Right ventricle myocardium superior (tissue), 1 donor: ENCODE measurements at regions of chr14 and their contacts with region 1.

Region 1: DNA sequence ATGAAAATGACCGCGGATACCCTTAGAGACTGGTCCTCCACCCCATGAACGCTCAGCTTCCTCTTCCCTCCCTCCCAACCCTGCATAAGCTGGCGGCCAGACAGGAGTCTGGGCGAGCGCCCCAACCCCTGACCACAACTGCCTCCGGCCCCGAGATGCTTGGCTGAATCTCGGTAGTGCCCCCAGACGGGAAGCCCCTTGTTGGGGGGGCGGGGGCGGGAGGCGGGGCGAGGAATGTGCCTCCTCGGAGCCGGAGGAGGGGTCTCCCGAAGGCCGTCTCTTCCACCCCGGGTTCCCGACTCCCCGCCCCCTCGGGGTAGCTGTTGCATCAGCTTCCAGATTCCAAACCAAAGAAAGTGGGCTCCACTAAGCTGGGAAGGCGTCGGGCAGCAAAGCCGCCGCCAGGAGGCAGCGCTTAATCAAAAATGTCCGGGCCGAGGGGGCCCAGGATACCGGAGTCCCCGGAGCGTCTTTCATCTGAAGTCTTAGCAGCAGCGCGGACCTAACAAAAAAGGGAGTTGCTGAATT is 7.1 kb upstream of the MRPL52 start:
- DNase-seq: peak; percentile 86
- ATAC-seq: peak; percentile 89

Region 2: DNA sequence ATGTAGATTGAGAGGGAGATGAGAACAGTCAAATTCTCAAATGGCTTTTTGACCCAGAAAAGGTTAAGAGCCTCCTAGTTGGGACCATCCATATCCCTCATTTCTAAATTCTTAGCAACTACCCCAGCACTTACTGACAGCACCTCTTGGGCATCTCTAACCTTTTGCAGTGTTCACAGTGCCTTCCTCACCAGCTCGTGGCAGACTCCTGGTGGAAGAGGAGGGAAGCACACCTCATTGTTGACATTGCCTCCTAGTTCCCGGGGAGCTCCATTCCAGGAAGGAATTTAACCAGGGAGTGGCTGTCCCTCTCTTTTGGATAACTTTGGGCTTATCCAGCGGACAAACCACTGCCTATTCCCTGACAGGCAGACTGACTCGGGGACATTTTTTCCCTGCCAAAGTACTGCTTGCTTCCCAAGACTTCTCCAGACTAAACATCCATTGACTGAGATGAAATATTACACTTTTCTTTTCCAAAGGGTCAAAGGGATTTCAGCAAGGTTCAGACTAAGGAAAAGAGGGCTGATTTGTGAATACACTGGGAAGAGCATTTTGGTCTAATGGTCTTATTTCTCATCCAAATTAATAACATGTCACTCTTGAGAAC is 169.5 kb before region 1 on chr14:
- intact Hi-C with region 1: loop called (anchors 10 kb)
- DNase-seq: peak; percentile 53
- ATAC-seq: peak; percentile 88

Region 3: GRCh38 chr14:22852940-22853767 is 30.5 kb after region 1 on chr14:
- intact Hi-C with region 1: loop called (anchors 1 kb)
- DNase-seq: peak; percentile 94
- ATAC-seq: peak; percentile 69